ENCODE measurements at regions of chr19 and their contacts with region 1.

Region 1: DNA sequence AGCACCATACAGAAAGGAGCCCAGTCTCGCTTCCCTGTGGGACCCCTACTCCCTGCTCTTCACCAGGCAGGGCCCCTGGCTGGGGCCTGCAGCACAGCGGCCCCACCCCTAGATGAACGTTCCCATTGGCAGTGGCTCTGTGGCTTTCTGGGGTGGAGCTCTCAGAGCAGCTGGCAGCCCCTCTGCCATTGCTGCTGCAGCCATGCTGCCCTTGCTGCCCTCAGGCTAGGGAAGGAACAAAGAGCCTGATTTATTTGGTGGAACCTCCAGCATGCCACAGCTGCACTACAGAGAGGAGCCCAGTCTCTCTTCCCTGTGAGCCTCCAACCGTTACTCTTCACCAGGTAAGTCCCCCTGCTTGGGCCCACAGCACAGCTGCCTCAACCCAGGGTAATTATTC is 5.8 kb downstream of the SIGLEC6 start:
- DNase-seq: no peak

Region 2: DNA sequence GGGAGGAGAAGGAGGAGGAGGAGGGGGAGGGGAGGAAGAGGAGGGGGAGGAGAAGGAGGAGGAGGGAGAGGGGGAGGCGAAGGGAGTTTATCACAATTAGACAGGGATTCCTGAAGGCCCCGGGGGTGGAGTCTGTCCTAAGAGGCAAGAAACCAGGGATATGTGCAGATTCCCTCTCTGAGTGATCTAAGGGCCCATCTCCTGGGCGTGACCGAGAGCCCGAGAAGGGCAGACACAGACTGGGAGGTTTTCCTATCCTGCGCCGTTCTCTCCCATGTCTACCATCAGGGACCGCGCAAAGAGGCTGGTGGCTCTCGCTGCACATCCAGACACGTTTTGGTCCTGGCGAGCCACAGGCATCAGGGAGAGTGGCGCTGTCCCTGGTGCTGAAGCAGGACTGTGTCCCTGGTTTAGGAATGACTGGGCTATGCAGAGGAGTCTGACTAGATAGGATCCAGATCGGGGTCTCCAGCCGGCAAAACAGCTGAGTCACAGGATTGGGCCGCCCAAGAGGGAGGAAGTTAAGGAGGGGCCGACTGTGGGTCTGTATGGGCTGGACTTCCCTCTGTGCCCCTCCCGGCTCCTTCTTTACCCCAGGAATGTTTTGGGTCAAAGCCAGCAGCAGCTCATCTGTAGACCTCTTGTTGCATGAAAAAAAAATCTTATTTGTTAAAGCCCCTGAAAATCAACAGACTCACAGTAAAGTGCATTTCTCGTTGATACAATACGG is 27.5 kb after region 1 on chr19:
- intact Hi-C with region 1: loop called in 1 of 2 experiments (anchors 1 kb)
- DNase-seq: peak; percentile 91